ENCODE measurements at regions of chr17 and their contacts with region 1.

Region 1: DNA sequence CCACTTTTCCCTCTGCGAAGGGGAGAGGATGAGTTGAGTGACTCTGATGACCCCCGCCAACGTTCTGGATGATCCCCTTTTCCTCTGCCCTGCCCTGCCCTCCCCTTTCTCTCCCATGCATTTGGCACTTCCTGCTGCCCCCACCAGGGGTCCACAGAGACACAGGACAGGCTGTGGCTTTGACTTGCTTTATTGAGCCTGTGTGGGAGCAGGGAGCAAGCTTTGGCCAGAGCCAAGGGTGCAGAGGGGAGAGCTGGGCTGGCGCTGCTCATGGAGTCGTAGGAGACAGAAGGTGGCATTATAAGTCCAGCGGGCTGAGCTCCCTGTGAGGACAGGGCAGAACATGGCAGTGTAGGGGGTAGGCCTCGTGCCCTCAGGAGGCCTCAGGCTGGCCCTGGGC is 1.6 kb downstream of the PPY start:
- DNase-seq: no peak
- H3K4me3 ChIP-seq: no peak overlapping the region
- CTCF ChIP-seq: peak; percentile 84

Region 2: DNA sequence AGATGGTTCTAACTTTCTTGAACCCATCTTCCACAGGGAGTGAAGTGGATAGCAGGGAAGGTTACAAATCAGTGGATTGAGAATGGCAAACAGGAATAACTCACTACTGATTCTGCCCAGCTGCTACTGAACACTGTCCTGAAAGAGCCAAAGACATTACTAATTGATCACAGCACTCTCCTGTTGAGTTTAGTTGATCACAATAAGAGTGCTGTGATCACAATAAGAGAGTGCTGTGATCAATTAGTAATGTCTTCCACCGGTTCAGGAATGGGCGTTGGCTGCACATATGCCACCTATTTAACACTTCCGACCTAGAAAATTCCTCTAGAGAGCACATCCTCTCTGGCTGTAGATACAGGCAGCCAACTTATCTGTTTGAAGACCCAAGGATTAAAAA is 149.0 kb before region 1 on chr17:
- CTCF ChIA-PET with region 1: no interaction called
- POLR2A ChIA-PET with region 1: no interaction called
- DNase-seq: no peak
- H3K4me3 ChIP-seq: no peak overlapping the region
- CTCF ChIP-seq: no peak

Region 3: GRCh38 chr17:43917348-43918018 is 23.1 kb before region 1 on chr17:
- CTCF ChIA-PET with region 1: interaction called, 49 read pairs
- POLR2A ChIA-PET with region 1: no interaction called
- DNase-seq: no peak
- H3K4me3 ChIP-seq: no peak overlapping the region
- CTCF ChIP-seq: peak; percentile 71

Region 4: DNA sequence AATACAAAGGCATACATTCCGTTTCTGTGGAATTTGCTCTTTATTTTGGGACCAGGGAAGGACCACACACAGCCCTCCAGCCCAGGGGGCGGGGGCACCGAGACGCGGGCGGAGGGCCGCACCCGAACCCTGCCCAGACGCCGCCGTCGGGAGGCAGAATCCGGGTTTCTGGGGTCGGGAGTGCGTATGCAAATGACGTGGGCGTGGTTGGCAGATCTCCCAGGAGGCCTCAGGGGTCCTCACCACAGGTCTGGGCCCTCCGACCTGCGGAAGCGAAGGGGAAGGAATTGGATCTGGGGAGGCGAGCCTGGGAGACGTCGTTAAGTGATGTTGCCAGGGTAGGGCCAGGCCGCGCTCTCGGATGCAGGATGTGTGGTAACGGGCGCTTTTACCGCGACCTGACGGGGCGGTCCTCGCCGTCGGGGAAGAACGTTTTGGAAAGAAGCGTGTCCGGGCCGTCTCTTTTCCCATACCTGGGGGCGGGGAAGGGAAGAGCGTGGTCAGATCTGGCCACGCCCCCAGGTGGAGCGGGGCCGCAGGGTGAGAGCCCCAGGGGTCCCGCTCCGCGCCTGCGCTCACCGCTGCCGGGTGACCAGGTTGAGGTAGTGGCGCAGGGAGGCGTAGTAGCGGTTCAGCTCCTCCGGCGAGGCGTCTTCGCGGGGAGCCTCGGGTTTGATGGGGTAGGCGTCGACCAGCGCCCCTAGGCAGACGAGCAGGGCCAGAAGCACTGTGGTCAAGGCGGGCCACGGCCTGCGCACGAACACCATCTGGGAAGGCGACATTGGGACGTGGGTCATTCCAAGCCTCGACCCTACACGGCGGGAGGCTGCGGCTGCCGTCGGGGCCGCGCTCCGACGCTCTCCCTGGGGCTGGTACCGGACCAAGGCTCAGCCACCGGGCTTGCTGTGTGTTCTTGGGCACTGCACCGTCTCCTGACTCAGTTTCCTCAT is 12.4 kb after region 1 on chr17:
- CTCF ChIA-PET with region 1: interaction called, 42 read pairs
- POLR2A ChIA-PET with region 1: no interaction called
- DNase-seq: no peak
- H3K4me3 ChIP-seq: no peak overlapping the region
- CTCF ChIP-seq: no peak

Region 5: GRCh38 chr17:43966271-43966670 is 25.6 kb after region 1 on chr17:
- CTCF ChIA-PET with region 1: interaction called, 35 read pairs
- POLR2A ChIA-PET with region 1: no interaction called
- DNase-seq: no peak
- H3K4me3 ChIP-seq: no peak overlapping the region
- CTCF ChIP-seq: no peak

Region 6: DNA sequence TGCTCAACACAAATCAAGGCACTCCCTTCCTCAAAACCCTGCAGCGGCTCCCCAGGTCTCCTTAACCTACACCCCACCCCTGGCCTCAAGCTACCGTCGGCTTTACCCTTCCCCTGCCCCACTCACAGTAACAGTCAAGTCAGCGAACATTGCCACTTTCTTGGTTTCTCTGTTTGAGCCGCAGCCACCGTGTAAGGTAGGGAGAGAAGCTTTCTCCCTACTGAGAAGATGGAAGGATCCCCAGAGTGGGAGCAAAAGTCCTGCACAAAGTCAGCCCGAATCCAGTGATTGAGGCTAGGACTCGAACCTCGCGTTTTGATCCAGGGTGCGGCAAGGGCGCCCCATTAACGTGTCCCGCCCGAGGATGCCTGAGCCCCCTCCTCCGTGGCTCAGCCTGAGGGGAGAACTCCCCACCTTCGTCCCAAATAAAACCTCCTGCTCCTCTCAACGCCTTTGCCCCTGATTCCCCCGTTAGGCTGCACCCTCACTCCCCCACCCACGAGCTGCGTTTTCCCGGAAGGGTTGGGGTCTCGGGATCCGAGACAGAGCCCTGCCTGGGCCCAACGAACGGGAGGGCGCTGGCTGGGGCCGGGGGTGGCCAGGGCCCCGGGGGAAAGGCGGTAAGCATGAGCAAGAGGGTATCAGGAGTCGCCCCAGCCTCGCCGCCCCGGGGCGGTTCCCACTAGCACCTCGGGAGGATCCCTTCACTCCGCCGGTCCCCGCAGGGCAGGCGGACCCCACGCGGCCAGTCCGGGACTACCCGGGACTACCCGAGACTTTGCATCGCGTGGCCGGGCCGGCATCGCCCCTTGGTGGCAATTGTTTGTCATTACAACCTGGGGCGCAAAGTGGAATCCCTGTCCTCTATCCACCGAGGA is 53.9 kb after region 1 on chr17:
- CTCF ChIA-PET with region 1: interaction called, 320 read pairs
- POLR2A ChIA-PET with region 1: no interaction called
- DNase-seq: no peak
- H3K4me3 ChIP-seq: peak overlapping the region; percentile 50
- CTCF ChIP-seq: peak; percentile 85

Region 7: GRCh38 chr17:44024271-44024663 is 83.6 kb after region 1 on chr17:
- CTCF ChIA-PET with region 1: interaction called, 12 read pairs
- POLR2A ChIA-PET with region 1: no interaction called
- DNase-seq: no peak
- H3K4me3 ChIP-seq: no peak overlapping the region
- CTCF ChIP-seq: no peak